ENCODE measurements at regions of chr17 and their contacts with region 1.

Region 1: GRCh38 chr17:35242805-35243560 is at the start of gene SLFN5:
- DNase-seq: peak; percentile 95
- H3K4me3 Mint-ChIP-seq: peak within 1 kb of the TSS; percentile 87
- H3K27ac Mint-ChIP-seq: peak within 1 kb of the TSS; percentile 97
- H3K4me1 Mint-ChIP-seq: peaks cover 65% of the 10 kb centered on the region
- H3K27me3 Mint-ChIP-seq: no peaks in the 10 kb centered on the region
- total RNA-seq, gene SLFN5: 34.1 to 35.0 TPM

Region 2: GRCh38 chr17:34980681-34981537 is 262.1 kb before region 1 on chr17:
- CTCF ChIA-PET with region 1: no interaction called
- intact Hi-C with region 1: loop called (anchors 2 kb)
- DNase-seq: peak; percentile 72
- H3K4me3 Mint-ChIP-seq: peak overlapping the region; percentile 95
- H3K27ac Mint-ChIP-seq: peak overlapping the region; percentile 91
- H3K4me1 Mint-ChIP-seq: peaks cover 43% of the 10 kb centered on the region
- H3K27me3 Mint-ChIP-seq: no peaks in the 10 kb centered on the region

Region 3: DNA sequence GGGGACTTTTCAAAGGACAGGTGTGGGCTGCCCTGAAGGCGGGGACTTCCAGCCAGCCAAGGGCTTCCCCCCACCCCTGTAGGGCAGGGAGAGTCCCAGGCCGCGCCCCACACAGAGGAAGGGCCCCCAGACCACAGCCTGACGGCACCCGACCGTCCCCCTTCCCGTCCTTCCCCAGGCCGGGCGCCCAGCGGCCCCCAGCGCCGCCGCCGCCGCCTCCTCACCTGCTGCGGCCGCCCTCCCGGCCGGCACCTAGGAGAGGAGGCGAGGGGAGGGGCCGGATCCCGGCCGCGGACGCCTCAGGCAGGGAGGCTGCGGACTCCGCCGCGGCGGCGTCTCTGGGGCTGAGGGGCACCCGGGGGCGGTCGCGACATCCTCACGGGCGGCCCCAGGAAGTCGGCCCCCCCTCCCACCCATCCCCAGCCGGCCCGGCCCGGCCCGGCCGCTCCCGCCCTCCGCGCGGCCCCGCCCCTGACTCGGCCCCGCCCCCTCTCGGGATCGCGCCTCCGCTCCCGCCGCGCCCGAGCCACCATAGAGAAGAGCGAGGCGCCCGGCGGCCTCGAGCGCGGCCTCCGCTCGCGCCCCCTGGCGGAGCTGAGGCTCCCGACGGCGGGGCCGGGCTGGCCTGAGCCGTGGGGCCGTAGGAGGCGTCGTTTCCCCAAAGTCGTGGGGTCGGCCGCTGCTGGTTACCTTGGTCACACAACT is 153.9 kb before region 1 on chr17:
- CTCF ChIA-PET with region 1: no interaction called
- intact Hi-C with region 1: loop called (anchors 2 kb)
- DNase-seq: peak; percentile 89
- H3K4me3 Mint-ChIP-seq: peak overlapping the region; percentile 86
- H3K27ac Mint-ChIP-seq: peak overlapping the region; percentile 96
- H3K4me1 Mint-ChIP-seq: peaks cover 48% of the 10 kb centered on the region
- H3K27me3 Mint-ChIP-seq: no peaks in the 10 kb centered on the region

Region 4: GRCh38 chr17:35214631-35215273 is 28.2 kb before region 1 on chr17:
- CTCF ChIA-PET with region 1: interaction called, 11 read pairs
- intact Hi-C with region 1: loop called (anchors 1 kb)
- DNase-seq: peak; percentile 48
- H3K4me3 Mint-ChIP-seq: peak overlapping the region; percentile 45
- H3K27ac Mint-ChIP-seq: peak overlapping the region; percentile 88
- H3K4me1 Mint-ChIP-seq: peaks cover 84% of the 10 kb centered on the region
- H3K27me3 Mint-ChIP-seq: no peaks in the 10 kb centered on the region

Region 5: DNA sequence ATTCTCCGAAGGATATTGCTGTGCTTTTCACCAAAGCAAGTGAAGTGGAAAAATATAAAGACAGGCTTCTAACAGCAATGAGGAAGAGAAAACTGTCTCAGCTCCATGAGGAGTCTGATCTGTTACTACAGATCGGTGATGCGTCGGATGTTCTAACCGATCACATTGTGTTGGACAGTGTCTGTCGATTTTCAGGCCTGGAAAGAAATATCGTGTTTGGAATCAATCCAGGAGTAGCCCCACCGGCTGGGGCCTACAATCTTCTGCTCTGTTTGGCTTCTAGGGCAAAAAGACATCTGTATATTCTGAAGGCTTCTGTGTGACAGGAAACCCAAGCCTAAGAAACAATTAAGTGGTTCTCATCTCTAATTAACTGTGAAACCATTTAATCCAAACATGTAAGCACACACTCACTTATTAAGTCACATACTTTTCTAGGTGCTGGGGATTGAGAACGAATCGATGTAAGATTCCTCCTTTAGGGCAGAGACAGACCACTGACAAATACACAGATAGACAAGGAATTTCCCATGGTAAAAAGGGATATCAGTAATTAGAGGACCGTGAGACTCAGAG is 22.7 kb after region 1 on chr17:
- CTCF ChIA-PET with region 1: no interaction called
- intact Hi-C with region 1: no loop called
- DNase-seq: no peak
- H3K4me3 Mint-ChIP-seq: no peak overlapping the region
- H3K27ac Mint-ChIP-seq: no peak overlapping the region
- H3K4me1 Mint-ChIP-seq: peaks cover 53% of the 10 kb centered on the region
- H3K27me3 Mint-ChIP-seq: no peaks in the 10 kb centered on the region

Region 6: DNA sequence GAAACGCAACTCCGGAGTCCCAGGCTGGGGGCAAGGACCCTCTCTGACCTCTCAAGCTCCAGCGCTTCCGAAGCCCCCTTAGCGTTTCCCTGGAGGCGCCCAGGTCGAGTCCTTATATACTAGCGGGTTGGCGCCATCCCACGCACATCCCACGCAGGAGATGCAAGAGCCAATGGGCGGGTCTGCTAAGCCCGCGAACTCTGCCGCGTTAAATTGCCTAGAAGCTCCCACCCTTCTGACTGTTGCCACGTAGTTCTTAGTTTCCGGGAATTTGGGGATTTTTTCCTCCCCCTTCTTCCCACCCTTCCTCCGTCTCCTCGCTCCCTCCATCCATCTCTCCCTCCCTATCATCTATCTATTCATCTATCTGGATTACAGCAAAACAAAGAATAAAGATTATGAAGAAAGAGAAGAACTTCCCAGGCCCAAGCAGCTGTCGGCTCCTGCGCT is 130.6 kb after region 1 on chr17 and contains the start of gene SLFN11:
- CTCF ChIA-PET with region 1: no interaction called
- intact Hi-C with region 1: loop called (anchors 1 kb)
- DNase-seq: peak; percentile 93
- H3K4me3 Mint-ChIP-seq: peak within 1 kb of the TSS; percentile 96
- H3K27ac Mint-ChIP-seq: peak within 1 kb of the TSS; percentile 99
- H3K4me1 Mint-ChIP-seq: peaks cover 52% of the 10 kb centered on the region
- H3K27me3 Mint-ChIP-seq: no peaks in the 10 kb centered on the region
- total RNA-seq, gene SLFN11: 46.4 to 49.6 TPM

Region 7: GRCh38 chr17:35407531-35407930 is 164.5 kb after region 1 on chr17:
- CTCF ChIA-PET with region 1: no interaction called
- intact Hi-C with region 1: no loop called
- DNase-seq: no peak
- H3K4me3 Mint-ChIP-seq: no peak overlapping the region
- H3K27ac Mint-ChIP-seq: no peak overlapping the region
- H3K4me1 Mint-ChIP-seq: peaks cover 2% of the 10 kb centered on the region
- H3K27me3 Mint-ChIP-seq: no peaks in the 10 kb centered on the region

Region 8: GRCh38 chr17:35578197-35578928 is 335.4 kb after region 1 on chr17 and contains the start of gene PEX12:
- CTCF ChIA-PET with region 1: no interaction called
- intact Hi-C with region 1: loop called (anchors 2 kb)
- DNase-seq: peak; percentile 93
- H3K4me3 Mint-ChIP-seq: peak within 1 kb of the TSS; percentile 93
- H3K27ac Mint-ChIP-seq: peak within 1 kb of the TSS; percentile 98
- H3K4me1 Mint-ChIP-seq: peaks cover 19% of the 10 kb centered on the region
- H3K27me3 Mint-ChIP-seq: no peaks in the 10 kb centered on the region
- total RNA-seq, gene PEX12: 6.2 to 6.5 TPM

Measured in activated naive CD4-positive, alpha-beta T cell treated with anti-CD3 and anti-CD28 coated beads for 36 hours (primary cell).